Dorsolateral prefrontal cortex (tissue), 120 donors: ENCODE measurements at regions of chr17 and their contacts with region 1.

Region 1: GRCh38 chr17:45060797-45061605 is at the start of gene NMT1:
- DNase-seq: peak; percentile 96 to 99 (median 99)
- H3K4me3 ChIP-seq: peak within 1 kb of the TSS; percentile 66 to 99 (median 84)
- H3K27ac ChIP-seq: peak within 1 kb of the TSS; percentile 53 to 99 (median 93)
- H3K27me3 ChIP-seq: no peaks in the 10 kb centered on the region
- CTCF ChIP-seq: peak in 41 of 56 donors; percentile 4 to 63 (median 37)
- total RNA-seq, gene NMT1: 111 to 220 (median 159) TPM

Region 2: DNA sequence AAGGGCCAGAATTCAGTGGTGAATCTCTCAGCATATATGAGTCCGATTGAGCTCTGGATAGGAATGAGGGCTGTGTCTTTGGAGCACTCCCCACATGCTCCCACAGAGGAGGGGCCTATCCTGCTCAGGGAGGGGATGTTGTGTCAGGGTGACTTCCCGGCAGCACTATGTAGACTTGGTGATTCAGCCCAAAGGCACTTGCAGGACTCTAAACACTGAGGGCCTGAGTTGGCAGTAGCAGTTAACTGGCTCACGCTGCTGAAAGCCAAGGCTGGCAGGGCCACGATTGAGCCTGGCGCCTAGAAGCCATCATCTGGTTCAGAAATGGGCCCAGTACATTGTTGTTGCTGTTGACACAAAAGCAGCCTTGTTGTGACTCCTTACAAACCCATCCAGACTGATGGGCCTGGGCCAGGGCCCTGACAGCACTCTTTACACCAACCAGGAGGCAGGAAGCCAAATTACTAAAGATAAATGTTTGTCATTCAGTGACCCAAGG is 32.0 kb after region 1 on chr17:
- intact Hi-C with region 1: loop called in 1 of 2 experiments (anchors 2 kb)
- DNase-seq: peak; percentile 49 to 97 (median 94)
- H3K4me3 ChIP-seq: peak overlapping the region in 11 of 59 donors; percentile 4 to 37 (median 19)
- H3K27ac ChIP-seq: peak overlapping the region; percentile 65 to 95 (median 87)
- H3K27me3 ChIP-seq: no peaks in the 10 kb centered on the region
- CTCF ChIP-seq: peak in 16 of 56 donors; percentile 5 to 52 (median 25)

Region 3: DNA sequence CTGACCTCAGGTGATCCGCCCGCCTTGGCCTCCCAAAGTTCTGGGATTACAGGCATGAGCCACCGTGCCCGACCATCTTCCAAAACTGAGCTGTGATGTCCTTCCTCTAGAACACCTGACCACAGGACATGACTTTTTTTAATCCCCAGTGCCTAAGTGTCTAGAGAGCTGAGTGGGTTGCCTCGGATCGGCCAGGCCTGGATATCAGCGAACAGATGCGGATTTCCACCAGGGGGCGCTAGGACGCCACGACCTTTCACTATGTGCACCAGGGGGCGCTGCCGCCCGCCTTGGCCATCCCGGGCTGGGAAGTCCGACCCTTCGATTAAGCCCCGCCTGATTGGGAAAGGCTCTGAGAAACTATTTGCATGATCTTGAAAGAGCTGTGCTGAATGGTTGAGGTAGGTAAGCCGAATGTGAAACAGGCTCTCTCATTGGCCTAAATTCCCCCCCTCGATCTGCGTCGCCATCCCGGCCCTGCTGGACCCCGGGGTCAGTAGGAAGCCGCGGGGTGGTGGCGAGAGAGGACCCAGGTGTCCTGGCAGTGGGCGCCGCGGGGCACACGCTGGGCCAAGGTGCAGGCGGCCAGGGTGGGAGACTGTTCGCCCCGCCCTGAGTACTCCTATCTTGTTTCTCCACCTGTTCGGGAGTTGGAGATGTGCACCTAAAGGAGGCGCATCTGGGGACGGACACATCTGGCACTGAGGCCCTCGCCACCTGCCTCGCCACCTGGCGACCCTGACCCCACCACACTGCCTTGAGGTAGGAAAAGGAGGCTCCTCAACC is 74.4 kb after region 1 on chr17 and contains the start of gene ACBD4:
- intact Hi-C with region 1: no loop called
- DNase-seq: peak; percentile 90 to 98 (median 94)
- H3K4me3 ChIP-seq: peak within 1 kb of the TSS; percentile 52 to 87 (median 73)
- H3K27ac ChIP-seq: peak within 1 kb of the TSS in 57 of 59 donors; percentile 7 to 92 (median 77)
- H3K27me3 ChIP-seq: no peaks in the 10 kb centered on the region
- CTCF ChIP-seq: peak; percentile 99 to 100 (median 100)
- total RNA-seq, gene ACBD4: 15.7 to 37.1 (median 23.9) TPM